ENCODE measurements at regions of chr6 and their contacts with region 1.

Region 1: GRCh38 chr6:107977283-107977682 is 19.3 kb upstream of the SEC63 start:
- DNase-seq: no peak
- ATAC-seq: peak; percentile 41; the same call in 1 of the 2 replicates
- H3K4me3 ChIP-seq: no peak overlapping the region
- H3K27ac ChIP-seq: no peak overlapping the region
- H3K4me1 ChIP-seq: no peaks in the 10 kb centered on the region
- H3K27me3 ChIP-seq: no peaks in the 10 kb centered on the region
- CTCF ChIP-seq: peak; percentile 39 to 62 (median 52); a peak in 4 of 6 replicates
- POLR2A ChIP-seq: no peak
- RAD21 ChIP-seq: peak; percentile 68

Region 2: DNA sequence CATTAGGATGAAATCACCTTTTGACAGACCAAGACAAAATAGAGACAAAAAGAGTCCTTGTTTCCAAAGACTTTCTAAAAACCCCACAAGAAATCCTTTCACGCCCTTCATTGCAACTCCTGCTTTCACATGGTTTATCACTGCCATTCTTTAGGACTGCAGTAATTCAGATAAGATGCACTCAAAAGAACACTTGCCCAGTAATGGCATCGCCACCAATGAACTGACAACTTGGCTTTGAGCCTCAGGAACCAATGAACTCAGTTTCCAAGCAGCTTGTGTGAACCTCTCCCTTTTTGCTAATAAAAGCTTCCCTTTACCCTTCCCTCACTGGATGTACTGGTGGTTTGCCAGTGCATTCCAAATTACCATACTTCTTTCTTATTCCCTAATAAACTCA is 75.4 kb after region 1 on chr6:
- CTCF ChIA-PET with region 1: interaction called, 18 read pairs
- POLR2A ChIA-PET with region 1: no interaction called
- RAD21 ChIA-PET with region 1: interaction called, 3 to 4 read pairs
- intact Hi-C with region 1: loop called (anchors 1 kb)
- DNase-seq: no peak
- ATAC-seq: no peak
- H3K4me3 ChIP-seq: no peak overlapping the region
- H3K27ac ChIP-seq: no peak overlapping the region
- H3K4me1 ChIP-seq: no peaks in the 10 kb centered on the region
- H3K27me3 ChIP-seq: no peaks in the 10 kb centered on the region
- CTCF ChIP-seq: no peak
- POLR2A ChIP-seq: no peak
- RAD21 ChIP-seq: no peak

Region 3: GRCh38 chr6:108526739-108527174 is 549.5 kb after region 1 on chr6:
- CTCF ChIA-PET with region 1: interaction called, 5 read pairs
- POLR2A ChIA-PET with region 1: no interaction called
- RAD21 ChIA-PET with region 1: no interaction called
- intact Hi-C with region 1: loop called (anchors 1 kb)
- DNase-seq: no peak
- ATAC-seq: peak; percentile 74
- H3K4me3 ChIP-seq: no peak overlapping the region
- H3K27ac ChIP-seq: no peak overlapping the region
- H3K4me1 ChIP-seq: no peaks in the 10 kb centered on the region
- H3K27me3 ChIP-seq: no peaks in the 10 kb centered on the region
- CTCF ChIP-seq: peak; percentile 73 to 88 (median 79)
- POLR2A ChIP-seq: no peak
- RAD21 ChIP-seq: peak; percentile 90

Measured in HCT116 (cell line).